ENCODE measurements at regions of chr13 and their contacts with region 1.

Region 1: GRCh38 chr13:112968908-112969691 is at the start of gene MCF2L:
- DNase-seq: peak; percentile 68 to 79 (median 76)
- H3K4me3 ChIP-seq: peak within 1 kb of the TSS; percentile 62 to 64
- H3K4me3 Mint-ChIP-seq: peak within 1 kb of the TSS; percentile 91 to 98 (median 96)
- H3K27ac ChIP-seq: peak within 1 kb of the TSS; percentile 57
- H3K27ac Mint-ChIP-seq: peak within 1 kb of the TSS; percentile 89 to 97 (median 94)
- H3K4me1 ChIP-seq: peaks cover 18% of the 10 kb centered on the region
- H3K4me1 Mint-ChIP-seq: peaks cover 19 to 38% (median 29%) of the 10 kb centered on the region in 4 donors
- H3K27me3 ChIP-seq: no peaks in the 10 kb centered on the region
- H3K27me3 Mint-ChIP-seq: no peaks in the 10 kb centered on the region
- total RNA-seq, gene MCF2L: 17.5 to 18.9 TPM

Region 2: GRCh38 chr13:113029487-113030258 is 60.6 kb after region 1 on chr13:
- CTCF ChIA-PET with region 1: interaction called, 4 read pairs
- POLR2A ChIA-PET with region 1: no interaction called
- intact Hi-C with region 1: loop called (anchors 1 kb)
- DNase-seq: peak in 4 of 5 donors; percentile 11 to 39 (median 21)
- H3K4me3 ChIP-seq: no peak overlapping the region
- H3K4me3 Mint-ChIP-seq: no peak overlapping the region
- H3K27ac ChIP-seq: no peak overlapping the region
- H3K27ac Mint-ChIP-seq: no peak overlapping the region
- H3K4me1 ChIP-seq: no peaks in the 10 kb centered on the region
- H3K4me1 Mint-ChIP-seq: peaks cover 0 to 4% (median 1%) of the 10 kb centered on the region in 4 donors
- H3K27me3 ChIP-seq: no peaks in the 10 kb centered on the region
- H3K27me3 Mint-ChIP-seq: no peaks in the 10 kb centered on the region